ENCODE measurements at regions of chr1 and their contacts with region 1.

Region 1: GRCh38 chr1:40338745-40339424 is 21.8 kb upstream of the COL9A2 start:
- DNase-seq: peak; percentile 86
- ATAC-seq: peak; percentile 77

Region 2: DNA sequence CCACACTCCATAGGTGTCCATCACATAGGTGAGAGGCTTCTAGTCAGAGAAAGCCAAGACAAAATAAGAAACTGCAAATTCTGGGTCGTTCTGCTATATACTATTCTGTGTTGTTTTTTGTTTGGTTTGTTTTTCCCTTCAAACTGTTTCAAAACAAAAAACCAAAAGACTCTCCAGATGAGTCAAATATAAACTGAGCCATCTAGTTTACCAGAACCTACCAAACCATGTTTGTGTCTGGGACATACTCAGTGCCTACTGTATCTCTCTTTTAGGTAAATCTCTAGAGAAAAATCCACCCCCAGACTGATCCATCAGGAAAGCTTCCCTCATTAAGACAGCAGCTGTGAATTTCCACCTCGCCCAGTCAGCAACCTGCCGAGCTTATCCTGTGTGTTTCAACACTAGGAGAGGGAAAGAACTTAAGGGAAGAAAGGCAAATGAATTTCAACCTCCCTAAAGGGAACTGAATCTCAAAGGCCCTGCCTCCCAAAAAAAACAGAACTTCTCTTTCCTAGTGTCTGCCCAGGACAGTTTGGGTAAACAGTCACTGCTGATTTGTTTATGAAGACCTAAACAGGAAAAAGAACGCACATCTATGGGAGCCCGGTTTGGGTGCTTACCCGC is 259.0 kb before region 1 on chr1:
- intact Hi-C with region 1: loop called (anchors 10 kb)
- DNase-seq: no peak
- ATAC-seq: no peak

Region 3: GRCh38 chr1:40143891-40144575 is 194.9 kb before region 1 on chr1:
- intact Hi-C with region 1: loop called (anchors 2 kb)
- DNase-seq: no peak
- ATAC-seq: peak; percentile 63

Region 4: GRCh38 chr1:40305457-40305856 is 33.4 kb before region 1 on chr1:
- intact Hi-C with region 1: no loop called
- DNase-seq: no peak
- ATAC-seq: no peak

Region 5: DNA sequence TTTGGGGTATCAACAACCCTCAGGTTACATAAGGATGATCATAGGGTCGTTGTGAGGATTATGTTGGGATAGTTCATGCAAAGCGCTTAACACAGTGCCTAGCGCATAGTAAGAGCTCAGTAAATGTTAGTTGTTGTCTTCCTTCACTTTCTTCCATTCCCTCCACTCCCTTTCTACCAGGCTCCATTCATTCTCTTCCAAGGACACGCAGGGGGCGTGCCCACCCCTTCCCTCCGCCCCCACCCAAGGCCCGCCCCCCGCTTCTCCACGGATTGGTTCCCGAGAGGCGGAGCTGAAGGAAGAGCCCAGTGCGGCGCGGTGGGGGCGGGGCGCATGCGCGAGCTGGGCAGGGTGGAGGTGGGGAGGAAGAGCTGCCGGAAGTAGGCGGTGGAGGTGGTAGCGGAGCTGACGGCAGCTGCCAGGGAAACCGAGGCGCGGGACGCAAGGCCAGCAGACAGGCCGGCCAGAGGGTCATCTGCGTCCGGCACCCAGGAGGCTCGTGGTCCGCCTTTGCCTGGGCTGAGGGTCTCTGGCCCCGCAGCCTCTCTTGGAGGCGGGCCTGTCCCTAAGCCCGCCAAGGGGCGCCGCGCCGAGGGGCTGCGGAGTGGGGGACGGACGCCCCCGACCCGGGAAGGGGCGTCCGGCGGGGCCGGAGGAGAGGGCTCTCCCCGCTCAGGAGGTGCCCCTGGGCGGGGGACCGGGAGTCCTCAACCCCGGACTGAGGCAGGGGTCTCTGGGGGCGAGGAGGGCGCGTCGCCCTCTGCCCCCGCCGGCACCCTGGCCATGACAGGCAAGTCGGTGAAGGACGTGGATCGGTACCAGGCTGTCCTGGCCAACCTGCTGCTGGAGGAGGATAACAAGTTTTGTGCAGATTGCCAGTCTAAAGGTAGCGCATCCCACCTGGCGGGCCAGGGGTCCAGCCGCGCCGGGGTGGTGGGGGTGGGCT is 34.7 kb after region 1 on chr1 and contains the start of gene SMAP2:
- intact Hi-C with region 1: no loop called
- DNase-seq: peak; percentile 99
- ATAC-seq: peak; percentile 99
- total RNA-seq, gene SMAP2: 16.3 TPM

Measured in Right ventricle myocardium inferior (tissue), 1 donor.